Activated naive CD4-positive, alpha-beta T cell treated with anti-CD3 and anti-CD28 coated beads for 36 hours (primary cell): ENCODE measurements at regions of chr3 and their contacts with region 1.

Region 1: GRCh38 chr3:187788984-187789857 is 44.0 kb upstream of the BCL6 start:
- DNase-seq: peak; percentile 59
- H3K4me3 Mint-ChIP-seq: no peak overlapping the region
- H3K27ac Mint-ChIP-seq: peak overlapping the region; percentile 69
- H3K4me1 Mint-ChIP-seq: peaks cover 28% of the 10 kb centered on the region
- H3K27me3 Mint-ChIP-seq: no peaks in the 10 kb centered on the region

Region 2: GRCh38 chr3:187770224-187770623 is 19.0 kb before region 1 on chr3:
- CTCF ChIA-PET with region 1: interaction called, 3 read pairs
- intact Hi-C with region 1: loop called (anchors 2 kb)
- DNase-seq: peak; percentile 73
- H3K4me3 Mint-ChIP-seq: no peak overlapping the region
- H3K27ac Mint-ChIP-seq: peak overlapping the region; percentile 82
- H3K4me1 Mint-ChIP-seq: peaks cover 38% of the 10 kb centered on the region
- H3K27me3 Mint-ChIP-seq: no peaks in the 10 kb centered on the region

Region 3: DNA sequence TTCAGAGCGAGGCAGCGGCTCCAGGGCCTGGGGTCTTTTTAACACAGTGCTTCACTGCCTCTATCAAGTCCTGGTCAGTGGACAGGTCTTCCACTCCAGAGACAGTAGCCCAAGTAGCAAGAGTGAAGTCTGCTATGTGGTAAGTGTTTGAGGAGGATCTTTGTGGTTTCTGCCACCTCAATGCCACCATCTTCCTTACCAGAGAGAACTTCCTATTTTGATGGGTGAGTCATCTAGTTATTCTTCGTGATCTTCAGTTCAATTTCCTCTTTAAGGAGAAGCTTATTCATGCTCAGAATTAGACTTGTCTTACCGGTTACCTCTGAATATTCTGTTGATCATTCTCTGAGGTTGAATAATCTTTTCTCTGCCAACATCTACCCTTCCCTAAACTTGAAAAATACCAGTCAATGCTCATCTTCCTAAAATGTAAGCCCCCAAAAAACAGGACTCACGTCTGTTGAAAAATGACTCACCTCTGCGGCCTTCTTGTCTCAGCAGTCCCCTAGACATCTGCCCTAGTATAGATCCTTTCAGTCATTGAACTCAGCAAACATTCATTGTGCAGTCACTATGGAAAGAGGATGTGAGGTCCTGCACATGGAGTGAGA is 11.8 kb before region 1 on chr3:
- CTCF ChIA-PET with region 1: no interaction called
- intact Hi-C with region 1: loop called (anchors 1 kb)
- DNase-seq: peak; percentile 76
- H3K4me3 Mint-ChIP-seq: peak overlapping the region; percentile 48
- H3K27ac Mint-ChIP-seq: peak overlapping the region; percentile 96
- H3K4me1 Mint-ChIP-seq: peaks cover 31% of the 10 kb centered on the region
- H3K27me3 Mint-ChIP-seq: no peaks in the 10 kb centered on the region

Region 4: DNA sequence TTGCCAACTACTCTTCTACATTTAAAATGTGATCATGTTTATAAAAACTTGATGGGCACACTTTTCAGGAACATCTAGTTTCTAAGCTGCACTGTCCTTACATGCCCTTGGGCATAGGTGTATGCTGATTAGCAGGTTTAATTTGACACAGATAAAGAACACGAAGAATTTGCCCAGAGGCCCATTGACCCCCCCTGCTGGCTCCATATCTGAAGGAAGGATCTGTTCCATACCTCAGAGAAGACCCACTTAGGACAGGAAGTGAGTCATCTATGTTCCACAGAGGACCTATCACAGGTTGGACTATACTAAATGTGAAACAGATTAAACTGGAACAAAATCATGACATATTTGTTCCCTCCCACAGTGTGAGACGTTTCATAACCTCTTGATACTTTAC is 271.9 kb after region 1 on chr3:
- CTCF ChIA-PET with region 1: no interaction called
- intact Hi-C with region 1: loop called (anchors 1 kb)
- DNase-seq: peak; percentile 74
- H3K4me3 Mint-ChIP-seq: no peak overlapping the region
- H3K27ac Mint-ChIP-seq: peak overlapping the region; percentile 68
- H3K4me1 Mint-ChIP-seq: peaks cover 32% of the 10 kb centered on the region
- H3K27me3 Mint-ChIP-seq: no peaks in the 10 kb centered on the region